ENCODE measurements at regions of chr13 and their contacts with region 1.

Region 1: GRCh38 chr13:85503790-85504189 is 295.4 kb downstream of the SLITRK6 start:
- DNase-seq: no peak
- H3K4me3 Mint-ChIP-seq: no peak overlapping the region
- H3K27ac Mint-ChIP-seq: no peak overlapping the region
- H3K4me1 Mint-ChIP-seq: no peaks in the 10 kb centered on the region
- H3K27me3 Mint-ChIP-seq: no peaks in the 10 kb centered on the region

Region 2: DNA sequence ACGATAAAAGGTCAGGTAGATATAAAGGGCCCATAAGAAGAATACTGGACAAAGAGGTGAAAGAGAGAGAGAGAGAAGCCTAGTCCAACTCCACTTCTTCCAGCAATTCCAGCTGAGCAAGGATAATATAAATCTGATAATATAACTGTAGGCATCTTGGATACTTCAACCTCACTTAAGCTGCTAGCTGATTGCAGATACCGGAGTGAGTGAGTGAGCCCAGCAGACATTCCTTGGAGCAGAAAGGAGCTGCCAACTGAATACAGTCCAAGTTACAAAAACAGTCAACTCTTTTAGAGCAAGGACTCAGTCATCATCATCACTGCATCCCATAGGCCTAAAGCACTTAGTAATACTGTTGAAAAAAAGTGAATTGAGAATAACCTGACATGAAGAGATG is 92.2 kb before region 1 on chr13:
- CTCF ChIA-PET with region 1: no interaction called
- POLR2A ChIA-PET with region 1: no interaction called
- intact Hi-C with region 1: no loop called
- DNase-seq: no peak
- H3K4me3 Mint-ChIP-seq: no peak overlapping the region
- H3K27ac Mint-ChIP-seq: no peak overlapping the region
- H3K4me1 Mint-ChIP-seq: no peaks in the 10 kb centered on the region
- H3K27me3 Mint-ChIP-seq: no peaks in the 10 kb centered on the region

Region 3: DNA sequence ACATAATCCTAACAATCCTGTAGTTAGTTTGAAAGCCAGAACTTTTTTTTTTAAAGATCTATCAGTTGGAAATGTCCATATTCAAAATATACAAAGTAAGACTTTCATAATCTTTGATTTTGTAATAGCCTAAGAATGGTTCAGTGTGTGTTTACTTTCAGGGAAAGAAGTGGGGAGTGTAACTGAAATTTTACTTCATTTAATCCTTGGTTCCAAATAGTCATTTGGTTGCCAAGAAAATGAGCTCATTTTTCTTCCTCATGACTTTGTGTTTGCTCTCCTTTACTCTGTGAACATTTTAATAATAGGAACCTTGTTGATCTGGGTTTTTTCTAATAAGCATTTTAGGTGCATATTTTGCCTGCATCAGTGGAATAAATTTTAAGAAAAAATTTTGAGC is 16.7 kb after region 1 on chr13:
- CTCF ChIA-PET with region 1: no interaction called
- POLR2A ChIA-PET with region 1: no interaction called
- intact Hi-C with region 1: loop called (anchors 1 kb)
- DNase-seq: no peak
- H3K4me3 Mint-ChIP-seq: no peak overlapping the region
- H3K27ac Mint-ChIP-seq: no peak overlapping the region
- H3K4me1 Mint-ChIP-seq: no peaks in the 10 kb centered on the region
- H3K27me3 Mint-ChIP-seq: no peaks in the 10 kb centered on the region

Region 4: DNA sequence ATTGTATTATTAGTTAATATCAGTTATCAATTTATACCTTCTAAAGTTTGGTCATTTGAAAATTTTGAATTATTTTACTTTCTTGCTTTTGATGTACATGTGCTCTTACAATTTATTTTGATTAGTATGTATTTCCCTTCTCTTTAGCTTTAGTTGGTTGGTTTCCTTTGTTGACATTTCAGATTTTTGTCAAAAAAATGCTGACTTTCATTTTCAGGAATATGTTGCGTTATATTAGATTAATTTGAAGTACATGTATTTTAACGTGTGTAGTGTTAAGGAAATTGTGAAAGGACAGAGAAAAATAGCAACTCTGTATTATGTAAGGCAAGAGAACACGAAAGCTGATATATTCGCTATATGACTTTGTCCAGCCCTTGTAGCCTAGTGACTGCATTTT is 638.3 kb after region 1 on chr13:
- CTCF ChIA-PET with region 1: no interaction called
- POLR2A ChIA-PET with region 1: no interaction called
- intact Hi-C with region 1: no loop called
- DNase-seq: no peak
- H3K4me3 Mint-ChIP-seq: no peak overlapping the region
- H3K27ac Mint-ChIP-seq: no peak overlapping the region
- H3K4me1 Mint-ChIP-seq: no peaks in the 10 kb centered on the region
- H3K27me3 Mint-ChIP-seq: no peaks in the 10 kb centered on the region

Measured in activated CD4-positive, alpha-beta memory T cell treated with anti-CD3 and anti-CD28 coated beads for 36 hours (primary cell).